Endothelial cell of umbilical vein (primary cell): ENCODE measurements at regions of chr2 and their contacts with region 1.

Region 1: DNA sequence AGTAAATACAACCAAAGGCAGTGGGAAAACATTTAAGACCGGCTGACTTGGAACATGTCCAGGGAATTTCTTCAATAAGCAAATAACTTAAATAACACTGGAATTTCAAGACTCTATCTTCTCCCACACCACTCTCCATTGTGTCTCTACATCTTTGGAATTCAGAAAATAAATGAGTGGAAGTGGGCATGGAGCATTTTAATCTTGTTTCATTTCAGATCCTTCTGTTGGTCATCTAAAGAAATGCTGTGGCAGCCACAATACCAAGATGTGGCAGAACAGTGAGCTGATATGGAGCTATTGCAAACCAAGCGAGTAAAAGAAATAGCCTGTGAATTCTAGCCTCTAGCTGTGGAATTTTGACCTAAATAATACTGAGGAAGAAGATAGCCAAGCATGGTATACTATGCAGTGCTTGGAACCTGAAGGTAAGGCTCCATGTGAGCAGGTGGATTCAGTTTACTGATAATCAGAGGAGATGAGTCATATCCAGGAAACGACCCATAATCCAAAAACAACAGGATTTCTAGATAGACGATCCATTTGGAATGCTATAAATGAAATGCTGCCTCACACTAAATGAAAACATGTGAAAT is 157.1 kb upstream of the SCN7A start:
- DNase-seq: peak; percentile 78
- H3K4me3 ChIP-seq: no peak overlapping the region
- H3K27ac ChIP-seq: no peak overlapping the region
- H3K4me1 ChIP-seq: peaks cover 13% of the 10 kb centered on the region
- H3K27me3 ChIP-seq: no peaks in the 10 kb centered on the region
- CTCF ChIP-seq: no peak
- POLR2A ChIP-seq: no peak

Region 2: DNA sequence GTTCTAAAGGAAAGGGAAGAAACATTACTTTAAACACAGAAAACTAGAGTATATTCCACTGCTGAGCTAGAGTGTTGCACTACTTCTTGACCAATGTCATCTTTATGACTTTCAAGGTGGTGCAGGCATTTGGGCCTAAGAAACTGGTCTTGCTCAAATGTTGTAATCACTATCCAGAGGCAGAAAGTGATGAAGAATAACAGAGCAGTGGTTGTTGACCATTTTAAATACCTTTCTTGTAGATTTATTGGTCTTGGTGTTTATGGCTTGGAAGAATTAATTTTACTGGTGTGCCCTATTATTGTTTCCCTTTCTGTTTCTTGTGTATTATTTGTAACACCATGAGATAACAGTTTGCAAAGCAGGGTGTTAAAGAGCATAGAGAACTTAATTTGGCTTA is 100.3 kb before region 1 on chr2:
- CTCF ChIA-PET with region 1: no interaction called
- POLR2A ChIA-PET with region 1: no interaction called
- dilution Hi-C with region 1: no loop called
- intact Hi-C with region 1: no loop called
- DNase-seq: no peak
- H3K4me3 ChIP-seq: no peak overlapping the region
- H3K27ac ChIP-seq: no peak overlapping the region
- H3K4me1 ChIP-seq: no peaks in the 10 kb centered on the region
- H3K27me3 ChIP-seq: no peaks in the 10 kb centered on the region
- CTCF ChIP-seq: no peak
- POLR2A ChIP-seq: no peak

Region 3: DNA sequence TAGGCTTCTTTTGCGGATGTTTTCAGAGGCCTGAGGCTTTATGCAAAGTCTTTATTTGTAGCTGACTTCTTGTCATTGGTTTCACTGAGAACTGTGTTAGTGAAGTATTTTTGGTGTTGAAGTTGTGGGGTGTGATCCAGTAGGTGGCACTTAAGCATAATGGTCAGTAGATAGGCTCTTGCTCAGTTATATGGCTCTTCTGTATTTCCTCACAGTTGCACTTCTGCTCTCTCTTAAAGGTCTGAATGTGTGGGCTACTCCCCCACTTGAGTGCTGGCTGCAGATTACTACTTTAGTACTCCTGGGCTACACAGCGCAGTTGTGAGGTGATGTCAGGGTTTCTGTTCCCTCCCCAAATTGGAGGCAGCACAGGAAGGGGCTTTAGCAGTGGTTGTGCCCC is 23.3 kb before region 1 on chr2:
- CTCF ChIA-PET with region 1: no interaction called
- POLR2A ChIA-PET with region 1: no interaction called
- dilution Hi-C with region 1: no loop called
- intact Hi-C with region 1: no loop called
- DNase-seq: no peak
- H3K4me3 ChIP-seq: no peak overlapping the region
- H3K27ac ChIP-seq: no peak overlapping the region
- H3K4me1 ChIP-seq: no peaks in the 10 kb centered on the region
- H3K27me3 ChIP-seq: no peaks in the 10 kb centered on the region
- CTCF ChIP-seq: no peak
- POLR2A ChIP-seq: no peak

Region 4: GRCh38 chr2:167140767-167141166 is 489.6 kb after region 1 on chr2:
- CTCF ChIA-PET with region 1: no interaction called
- POLR2A ChIA-PET with region 1: no interaction called
- dilution Hi-C with region 1: no loop called
- intact Hi-C with region 1: loop called (anchors 10 kb)
- DNase-seq: peak; percentile 86
- H3K4me3 ChIP-seq: no peak overlapping the region
- H3K27ac ChIP-seq: peak overlapping the region; percentile 62
- H3K4me1 ChIP-seq: peaks cover 6% of the 10 kb centered on the region
- H3K27me3 ChIP-seq: no peaks in the 10 kb centered on the region
- CTCF ChIP-seq: no peak
- POLR2A ChIP-seq: no peak